K562 (cell line): ENCODE measurements at regions of chr12 and their contacts with region 1.

Region 1: DNA sequence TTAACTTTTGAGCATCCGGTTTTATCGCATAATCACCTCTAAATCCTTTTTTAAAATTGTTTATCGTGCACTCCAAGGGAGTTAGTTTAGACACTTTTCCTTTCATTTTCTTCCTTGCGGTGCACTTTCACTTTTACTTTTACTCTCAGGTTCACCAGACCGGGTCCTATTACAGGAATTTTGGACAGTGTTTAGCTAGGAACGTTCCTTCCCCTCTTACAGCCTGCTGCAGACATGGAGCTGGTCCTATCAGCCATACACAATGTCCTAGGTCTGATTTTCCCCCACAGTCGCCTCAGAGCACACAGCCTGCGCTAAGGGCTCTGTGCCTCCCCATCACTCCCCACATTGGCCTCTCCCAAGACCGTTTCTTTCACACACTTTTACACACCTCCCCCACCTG is 103.9 kb downstream of the ALG10 start:
- DNase-seq: peak in 2 of 4 experiments; percentile 12 to 24
- ATAC-seq: peak; percentile 81
- H3K4me3 ChIP-seq: 0 out of 2 replicates have a peak overlapping the region, but pooled peaks have one; percentile 3
- H3K27ac ChIP-seq: peak overlapping the region; percentile 76
- H3K4me1 ChIP-seq: peaks cover 3 to 16% of the 10 kb centered on the region in 2 experiments; a peak in 3 of 5 replicates
- H3K27me3 ChIP-seq: no peaks in the 10 kb centered on the region
- CTCF ChIP-seq: no peak
- EP300 ChIP-seq: no peak
- POLR2A ChIP-seq: no peak
- RAD21 ChIP-seq: no peak

Region 2: DNA sequence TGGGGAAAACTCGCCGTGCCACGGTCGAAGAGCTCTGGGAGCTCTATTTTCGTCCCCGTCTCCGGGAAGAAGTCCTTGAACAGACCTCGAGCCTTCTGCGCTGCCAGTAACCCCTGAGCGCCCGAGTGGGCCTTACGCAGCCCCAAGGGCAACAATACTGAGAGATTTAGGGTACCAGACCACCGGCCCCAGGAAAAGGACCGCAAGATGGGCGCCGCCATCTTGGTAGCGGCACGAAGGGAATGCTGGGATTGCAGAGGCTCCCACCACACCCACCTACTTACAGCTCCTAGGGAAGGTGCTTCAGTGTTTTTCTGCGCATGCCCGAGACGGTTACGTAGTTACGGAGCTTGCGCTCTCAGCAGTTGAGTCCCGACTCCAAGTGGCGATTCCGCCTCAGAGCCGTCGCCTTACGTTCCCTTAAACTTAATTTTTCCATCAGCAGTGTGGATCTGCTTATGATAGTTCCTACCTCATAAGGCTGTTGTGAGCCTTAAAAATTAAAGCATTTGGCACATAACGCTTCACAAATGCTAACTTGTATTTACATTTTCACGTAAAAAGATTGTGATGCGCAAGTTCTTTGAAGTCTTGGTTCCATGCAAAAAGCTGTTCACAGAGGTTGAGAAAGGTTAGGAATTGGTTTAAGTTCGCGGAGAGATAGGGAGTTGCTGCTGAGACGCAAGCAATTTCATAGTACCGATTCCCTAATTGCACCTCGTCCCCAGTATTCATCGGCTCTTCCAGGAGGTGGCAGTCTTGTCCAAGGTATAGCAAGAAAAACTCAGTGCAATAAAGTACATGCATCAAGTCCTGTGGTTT is 1370.4 kb before region 1 on chr12 and contains the start of gene YARS2:
- CTCF ChIA-PET with region 1: no interaction called
- POLR2A ChIA-PET with region 1: no interaction called
- in situ Hi-C with region 1: no loop called
- intact Hi-C with region 1: loop called (anchors 10 kb)
- DNase-seq: peak; percentile 83 to 98 (median 88)
- ATAC-seq: peak; percentile 95
- H3K4me3 ChIP-seq: peak within 1 kb of the TSS; percentile 73
- H3K27ac ChIP-seq: peak within 1 kb of the TSS; percentile 69
- H3K4me1 ChIP-seq: peaks cover 4 to 5% of the 10 kb centered on the region in 2 experiments; a peak in 1 of 5 replicates
- H3K27me3 ChIP-seq: no peaks in the 10 kb centered on the region
- CTCF ChIP-seq: peak; percentile 74 to 90 (median 89)
- EP300 ChIP-seq: no peak
- POLR2A ChIP-seq: peak; percentile 97
- RAD21 ChIP-seq: peak; percentile 95 to 97
- polyA plus RNA-seq, gene YARS2: 15.2 to 18.4 TPM

Region 3: GRCh38 chr12:34186492-34186891 is 60.3 kb after region 1 on chr12:
- CTCF ChIA-PET with region 1: no interaction called
- POLR2A ChIA-PET with region 1: no interaction called
- in situ Hi-C with region 1: no loop called
- intact Hi-C with region 1: loop called (anchors 1 kb)
- DNase-seq: peak in 1 of 4 experiments; percentile 12
- ATAC-seq: peak; percentile 64
- H3K4me3 ChIP-seq: no peak overlapping the region
- H3K27ac ChIP-seq: no peak overlapping the region
- H3K4me1 ChIP-seq: no peaks in the 10 kb centered on the region; a peak in 1 of 5 replicates
- H3K27me3 ChIP-seq: no peaks in the 10 kb centered on the region
- CTCF ChIP-seq: peak; percentile 22 to 53 (median 46); a peak in 4 of 6 replicates
- EP300 ChIP-seq: no peak
- POLR2A ChIP-seq: no peak
- RAD21 ChIP-seq: peak; percentile 39 to 62; a peak in 3 of 4 replicates

Region 4: DNA sequence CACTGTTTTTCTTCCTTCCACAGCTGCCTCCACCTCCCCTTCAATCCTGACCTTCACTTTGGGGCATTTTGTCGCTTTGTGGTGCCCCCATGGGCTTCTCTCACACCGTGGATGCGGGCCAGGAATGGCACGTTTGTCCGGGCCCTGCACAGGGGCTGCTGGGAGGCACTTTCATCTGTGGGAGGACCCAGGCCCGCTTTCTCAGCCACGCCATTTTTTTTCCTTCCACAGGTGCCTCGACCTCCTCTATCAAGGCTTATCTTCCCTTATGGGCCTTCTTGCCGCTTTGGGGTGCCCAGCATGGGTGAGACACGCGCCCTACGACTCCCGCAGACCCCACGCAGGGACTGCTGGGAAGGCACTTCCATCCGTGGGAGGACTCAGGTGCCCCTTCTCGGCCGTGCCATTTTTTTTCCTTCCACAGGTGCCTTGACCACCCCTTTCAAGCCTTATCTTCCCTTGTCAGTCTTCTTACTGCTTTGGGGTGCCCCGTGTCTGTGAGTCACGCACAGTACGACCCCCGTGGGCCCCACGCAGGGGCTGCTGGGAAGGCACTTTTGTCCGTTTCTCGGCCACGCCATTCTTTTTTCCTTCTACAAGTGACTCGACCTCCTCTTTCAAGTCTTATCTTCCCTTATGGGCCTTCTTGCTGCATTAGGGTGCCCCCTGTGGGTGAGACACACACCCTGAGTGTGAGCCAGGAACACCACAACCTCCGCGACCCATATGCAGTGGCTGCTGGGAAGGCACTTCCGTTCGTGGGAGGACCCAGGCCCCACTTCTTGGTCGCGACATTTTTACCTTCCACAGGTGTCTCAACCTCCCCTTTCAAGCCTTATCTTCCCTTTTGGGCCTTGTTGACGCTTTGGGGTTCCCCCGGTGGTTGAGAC is 166.7 kb after region 1 on chr12:
- CTCF ChIA-PET with region 1: no interaction called
- POLR2A ChIA-PET with region 1: no interaction called
- in situ Hi-C with region 1: loop called (anchors 10 kb)
- intact Hi-C with region 1: loop called (anchors 1 kb)
- DNase-seq: peak; percentile 37 to 73 (median 42)
- ATAC-seq: peak; percentile 88
- H3K4me3 ChIP-seq: no peak overlapping the region
- H3K27ac ChIP-seq: no peak overlapping the region
- H3K4me1 ChIP-seq: peaks cover 0 to 16% of the 10 kb centered on the region in 2 experiments; a peak in 2 of 5 replicates
- H3K27me3 ChIP-seq: peaks cover 6 to 29% of the 10 kb centered on the region in 2 experiments; a peak in 3 of 5 replicates
- CTCF ChIP-seq: peak; percentile 62 to 70 (median 63)
- EP300 ChIP-seq: no peak
- POLR2A ChIP-seq: no peak
- RAD21 ChIP-seq: peak in 1 of 2 experiments; percentile 48; a peak in 2 of 4 replicates

Region 5: GRCh38 chr12:34625116-34625515 is 498.9 kb after region 1 on chr12:
- CTCF ChIA-PET with region 1: no interaction called
- POLR2A ChIA-PET with region 1: no interaction called
- in situ Hi-C with region 1: loop called (anchors 10 kb)
- intact Hi-C with region 1: loop called (anchors 2 kb)
- DNase-seq: peak in 2 of 4 experiments; percentile 15 to 28
- ATAC-seq: no peak
- H3K4me3 ChIP-seq: no peak overlapping the region
- H3K27ac ChIP-seq: no peak overlapping the region
- H3K4me1 ChIP-seq: no peaks in the 10 kb centered on the region
- H3K27me3 ChIP-seq: no peaks in the 10 kb centered on the region
- CTCF ChIP-seq: peak; percentile 29 to 46 (median 34); a peak in 3 of 6 replicates
- EP300 ChIP-seq: no peak
- POLR2A ChIP-seq: no peak
- RAD21 ChIP-seq: peak in 1 of 2 experiments; percentile 49; a peak in 2 of 4 replicates